ENCODE measurements at regions of chr12 and their contacts with region 1.

Region 1: DNA sequence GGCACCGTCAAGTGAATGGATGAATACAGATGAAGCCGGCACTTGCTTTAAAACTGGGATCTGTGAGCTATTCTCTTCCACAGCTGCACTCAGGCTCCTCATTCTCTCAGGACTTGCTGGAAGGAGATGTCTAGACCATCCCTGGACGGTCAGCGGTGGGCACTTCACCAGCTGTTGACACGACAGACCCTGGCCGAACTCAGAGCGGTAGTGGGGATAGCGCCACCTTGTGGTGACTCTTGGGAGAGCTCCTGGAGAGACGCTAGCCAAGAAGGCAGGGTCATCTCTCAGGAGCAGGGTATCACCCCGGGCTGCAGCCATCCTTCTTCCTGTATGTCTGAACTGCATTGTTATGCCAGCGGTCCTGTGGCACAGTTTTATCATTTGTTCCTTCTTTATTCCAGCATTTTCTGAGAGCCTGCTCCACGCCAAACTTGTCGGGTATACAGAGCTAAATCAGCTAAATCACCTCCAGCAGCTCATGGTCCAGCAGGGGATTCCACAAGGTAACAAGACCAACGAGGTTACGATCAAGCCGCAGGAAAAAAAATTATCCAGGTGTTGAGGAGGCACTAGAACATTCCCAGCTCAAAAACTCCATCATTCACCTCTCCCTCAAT is 10.0 kb downstream of the WNT1 start:
- DNase-seq: peak; percentile 61 to 82 (median 68)
- H3K4me3 ChIP-seq: no peak overlapping the region
- H3K4me3 Mint-ChIP-seq: peak overlapping the region in 1 of 7 donors; percentile 3
- H3K27ac ChIP-seq: no peak overlapping the region
- H3K27ac Mint-ChIP-seq: peak overlapping the region in 5 of 8 donors; percentile 32 to 90 (median 66)
- H3K4me1 ChIP-seq: no peaks in the 10 kb centered on the region
- H3K4me1 Mint-ChIP-seq: peaks cover 6 to 11% (median 9%) of the 10 kb centered on the region in 3 donors
- H3K27me3 ChIP-seq: no peaks in the 10 kb centered on the region
- H3K27me3 Mint-ChIP-seq: peaks cover 25 to 31% of the 10 kb centered on the region in 2 donors

Region 2: DNA sequence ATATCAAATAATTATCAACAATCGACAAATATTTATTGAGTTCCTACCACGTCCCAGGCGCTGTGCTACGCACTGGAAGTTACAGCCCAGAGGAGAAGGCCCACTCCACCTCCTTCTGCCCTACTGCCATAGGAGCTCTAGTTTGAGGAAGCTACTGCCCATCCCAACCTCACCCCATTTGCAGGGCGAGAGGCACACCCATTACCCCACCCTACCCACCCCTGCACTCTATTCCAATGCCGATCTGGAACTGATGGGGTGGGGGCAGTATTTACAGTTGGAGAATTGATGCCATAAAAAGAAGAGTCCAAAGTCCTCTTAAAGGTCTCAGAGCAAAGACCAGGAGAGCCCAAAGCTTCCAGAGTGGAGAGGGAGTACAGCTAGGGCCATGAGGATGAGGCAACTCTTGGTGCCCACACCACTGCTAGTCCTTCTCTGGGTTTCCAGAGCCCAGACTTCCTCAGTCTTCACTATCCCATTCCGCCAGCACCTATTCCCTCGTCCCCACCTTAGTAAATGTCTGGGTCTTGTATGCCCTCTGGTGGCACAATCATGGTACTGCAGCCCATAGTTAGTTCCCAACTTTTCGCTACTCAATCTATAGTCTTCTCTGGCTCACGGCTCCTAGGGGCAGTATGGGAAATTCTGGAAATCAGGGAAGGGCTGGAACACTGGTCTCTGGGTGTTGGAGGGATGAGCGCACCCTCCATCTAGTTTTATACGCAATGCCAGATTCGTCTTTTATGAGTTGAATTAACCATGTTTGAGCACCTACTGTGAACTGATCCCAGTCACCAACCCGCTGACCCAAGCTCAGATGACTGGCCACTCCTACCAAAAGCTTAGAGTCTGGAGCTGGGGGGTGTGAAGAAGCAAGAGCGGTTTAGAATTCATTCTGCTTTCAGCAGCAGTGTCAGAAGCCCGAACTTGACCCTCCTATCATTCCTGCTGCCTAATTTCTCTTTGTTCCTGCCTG is 192.4 kb before region 1 on chr12:
- CTCF ChIA-PET with region 1: no interaction called
- POLR2A ChIA-PET with region 1: no interaction called
- DNase-seq: peak; percentile 32 to 67 (median 49)
- H3K4me3 ChIP-seq: no peak overlapping the region
- H3K4me3 Mint-ChIP-seq: no peak overlapping the region
- H3K27ac ChIP-seq: no peak overlapping the region
- H3K27ac Mint-ChIP-seq: peak overlapping the region in 1 of 8 donors; percentile 41
- H3K4me1 ChIP-seq: no peaks in the 10 kb centered on the region
- H3K4me1 Mint-ChIP-seq: peaks cover 0 to 5% (median 3%) of the 10 kb centered on the region in 3 donors
- H3K27me3 ChIP-seq: no peaks in the 10 kb centered on the region
- H3K27me3 Mint-ChIP-seq: peaks cover 9 to 17% of the 10 kb centered on the region in 2 donors

Region 3: GRCh38 chr12:48890657-48891418 is 97.3 kb before region 1 on chr12:
- CTCF ChIA-PET with region 1: no interaction called
- POLR2A ChIA-PET with region 1: no interaction called
- DNase-seq: peak; percentile 57 to 79 (median 64)
- H3K4me3 ChIP-seq: no peak overlapping the region
- H3K4me3 Mint-ChIP-seq: peak overlapping the region in 3 of 7 donors; percentile 18 to 42 (median 39)
- H3K27ac ChIP-seq: no peak overlapping the region
- H3K27ac Mint-ChIP-seq: peak overlapping the region in 2 of 8 donors; percentile 11 to 61
- H3K4me1 ChIP-seq: no peaks in the 10 kb centered on the region
- H3K4me1 Mint-ChIP-seq: peaks cover 6 to 10% (median 8%) of the 10 kb centered on the region in 3 donors
- H3K27me3 ChIP-seq: peaks cover 10% of the 10 kb centered on the region
- H3K27me3 Mint-ChIP-seq: peaks cover 9 to 19% of the 10 kb centered on the region in 2 donors

Region 4: DNA sequence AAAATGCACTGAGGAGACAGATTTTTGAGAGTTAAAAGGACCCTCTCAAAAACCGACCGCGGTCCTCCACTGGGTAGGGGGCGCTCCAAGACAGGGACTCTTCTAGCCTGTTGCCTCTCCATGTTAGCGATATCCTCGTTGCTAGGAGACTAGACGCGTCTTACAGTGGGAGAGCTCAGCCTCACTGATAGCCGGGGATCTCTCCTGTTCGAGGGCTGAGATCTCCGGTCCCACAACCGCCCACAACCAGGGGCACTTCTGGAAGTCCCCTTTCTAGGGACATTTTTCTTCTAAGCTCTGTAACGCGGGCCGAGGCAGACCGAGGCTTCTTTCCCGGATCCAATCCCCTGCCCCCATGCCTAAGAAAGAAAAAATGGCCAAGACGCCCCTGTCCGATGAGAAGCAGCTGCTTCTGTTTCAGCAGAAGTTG is 84.1 kb before region 1 on chr12:
- CTCF ChIA-PET with region 1: interaction called, 16 read pairs
- POLR2A ChIA-PET with region 1: no interaction called
- DNase-seq: peak; percentile 70 to 89 (median 78)
- H3K4me3 ChIP-seq: peak overlapping the region; percentile 49
- H3K4me3 Mint-ChIP-seq: peak overlapping the region; percentile 28 to 83 (median 80)
- H3K27ac ChIP-seq: no peak overlapping the region
- H3K27ac Mint-ChIP-seq: peak overlapping the region; percentile 41 to 91 (median 82)
- H3K4me1 ChIP-seq: peaks cover 6% of the 10 kb centered on the region
- H3K4me1 Mint-ChIP-seq: peaks cover 3 to 14% (median 4%) of the 10 kb centered on the region in 3 donors
- H3K27me3 ChIP-seq: no peaks in the 10 kb centered on the region
- H3K27me3 Mint-ChIP-seq: no peaks in the 10 kb centered on the region

Region 5: GRCh38 chr12:48936379-48936979 is 51.7 kb before region 1 on chr12:
- CTCF ChIA-PET with region 1: interaction called, 10 read pairs
- POLR2A ChIA-PET with region 1: no interaction called
- DNase-seq: peak; percentile 75 to 88 (median 82)
- H3K4me3 ChIP-seq: no peak overlapping the region
- H3K4me3 Mint-ChIP-seq: no peak overlapping the region
- H3K27ac ChIP-seq: no peak overlapping the region
- H3K27ac Mint-ChIP-seq: peak overlapping the region; percentile 38 to 98 (median 96)
- H3K4me1 ChIP-seq: peaks cover 33% of the 10 kb centered on the region
- H3K4me1 Mint-ChIP-seq: peaks cover 36 to 49% (median 42%) of the 10 kb centered on the region in 3 donors
- H3K27me3 ChIP-seq: no peaks in the 10 kb centered on the region
- H3K27me3 Mint-ChIP-seq: no peaks in the 10 kb centered on the region

Region 6: GRCh38 chr12:48969833-48970701 is 18.1 kb before region 1 on chr12:
- CTCF ChIA-PET with region 1: interaction called, 237 read pairs
- POLR2A ChIA-PET with region 1: interaction called, 5 read pairs
- DNase-seq: peak in 4 of 5 donors; percentile 28 to 61 (median 32)
- H3K4me3 ChIP-seq: peak overlapping the region; percentile 39
- H3K4me3 Mint-ChIP-seq: peak overlapping the region; percentile 24 to 82 (median 63)
- H3K27ac ChIP-seq: no peak overlapping the region
- H3K27ac Mint-ChIP-seq: peak overlapping the region in 1 of 8 donors; percentile 11
- H3K4me1 ChIP-seq: peaks cover 36% of the 10 kb centered on the region
- H3K4me1 Mint-ChIP-seq: peaks cover 19 to 37% (median 22%) of the 10 kb centered on the region in 3 donors
- H3K27me3 ChIP-seq: peaks cover 42% of the 10 kb centered on the region
- H3K27me3 Mint-ChIP-seq: peaks cover 30 to 34% of the 10 kb centered on the region in 2 donors

Region 7: DNA sequence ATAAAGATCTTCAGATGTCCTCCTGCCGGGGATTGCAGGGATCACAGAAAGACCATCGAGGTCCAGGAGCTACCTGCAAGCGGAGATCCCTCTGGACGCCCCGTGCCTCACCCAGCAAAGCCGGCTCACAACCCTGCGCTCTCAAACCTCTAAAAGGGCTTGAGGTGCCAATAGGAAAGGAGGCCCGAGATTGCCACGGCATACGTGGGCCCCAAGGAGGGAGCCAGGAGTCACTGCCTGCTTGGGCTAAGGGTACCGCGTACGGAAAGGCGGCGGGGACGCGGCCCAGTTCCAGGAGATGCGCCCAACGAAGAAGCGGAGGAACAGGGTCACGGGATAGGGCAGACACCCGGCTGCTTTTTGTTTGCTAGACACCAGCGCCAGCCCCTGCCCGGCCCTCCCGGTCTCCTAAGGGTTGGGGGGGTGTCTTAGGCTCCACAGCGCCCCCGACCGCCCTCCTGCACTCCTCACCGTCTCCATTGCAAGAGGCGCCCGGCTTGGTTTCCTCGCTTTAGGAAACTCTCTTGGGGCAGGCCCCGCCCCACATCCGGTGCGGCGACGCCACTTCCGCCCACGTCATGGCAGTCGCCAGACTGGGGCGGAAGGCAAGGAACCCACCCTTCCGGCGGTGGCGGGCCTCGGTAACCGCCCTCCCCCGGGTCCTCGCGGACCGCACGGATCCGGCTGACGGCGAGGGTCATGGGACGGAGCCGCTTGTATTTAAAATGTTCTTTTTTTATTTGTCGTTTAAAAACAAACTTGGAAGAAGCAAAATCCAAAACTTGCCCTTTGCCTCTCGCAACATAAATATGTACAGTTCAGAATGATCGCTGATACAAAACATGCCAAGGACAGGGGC is 30.4 kb after region 1 on chr12 and contains the start of gene PRKAG1:
- CTCF ChIA-PET with region 1: interaction called, 14 read pairs
- POLR2A ChIA-PET with region 1: interaction called, 3 read pairs
- DNase-seq: peak; percentile 96 to 99 (median 98)
- H3K4me3 ChIP-seq: peak within 1 kb of the TSS; percentile 89
- H3K4me3 Mint-ChIP-seq: peak within 1 kb of the TSS; percentile 85 to 98 (median 94)
- H3K27ac ChIP-seq: peak within 1 kb of the TSS; percentile 92
- H3K27ac Mint-ChIP-seq: peak within 1 kb of the TSS; percentile 98 to 100 (median 99)
- H3K4me1 ChIP-seq: peaks cover 22% of the 10 kb centered on the region
- H3K4me1 Mint-ChIP-seq: peaks cover 26 to 55% (median 41%) of the 10 kb centered on the region in 3 donors
- H3K27me3 ChIP-seq: no peaks in the 10 kb centered on the region
- H3K27me3 Mint-ChIP-seq: peaks cover 0 to 1% of the 10 kb centered on the region in 2 donors
- total RNA-seq, gene PRKAG1: 73.3 to 78.3 TPM

Measured in CD8-positive, alpha-beta memory T cell (primary cell).